Right ventricle myocardium superior (tissue), 1 donor: ENCODE measurements at regions of chr7 and their contacts with region 1.

Region 1: DNA sequence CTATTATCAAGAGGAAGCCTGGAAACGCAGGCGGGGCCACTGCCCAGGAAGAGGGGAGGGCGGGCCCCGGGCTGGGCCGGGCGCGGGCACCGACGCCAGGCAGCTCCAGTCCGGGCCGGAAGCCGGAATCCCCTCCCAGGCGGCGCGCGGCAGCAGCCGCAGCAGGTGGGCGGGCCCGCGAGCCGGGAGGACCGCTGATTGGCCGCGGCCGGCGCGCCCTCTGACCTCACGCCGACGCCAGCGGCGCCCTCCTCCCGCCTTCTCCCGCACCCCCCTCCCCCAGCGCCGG is 438 bp downstream of the BCL7B start:
- DNase-seq: peak; percentile 96
- ATAC-seq: peak; percentile 98

Region 2: DNA sequence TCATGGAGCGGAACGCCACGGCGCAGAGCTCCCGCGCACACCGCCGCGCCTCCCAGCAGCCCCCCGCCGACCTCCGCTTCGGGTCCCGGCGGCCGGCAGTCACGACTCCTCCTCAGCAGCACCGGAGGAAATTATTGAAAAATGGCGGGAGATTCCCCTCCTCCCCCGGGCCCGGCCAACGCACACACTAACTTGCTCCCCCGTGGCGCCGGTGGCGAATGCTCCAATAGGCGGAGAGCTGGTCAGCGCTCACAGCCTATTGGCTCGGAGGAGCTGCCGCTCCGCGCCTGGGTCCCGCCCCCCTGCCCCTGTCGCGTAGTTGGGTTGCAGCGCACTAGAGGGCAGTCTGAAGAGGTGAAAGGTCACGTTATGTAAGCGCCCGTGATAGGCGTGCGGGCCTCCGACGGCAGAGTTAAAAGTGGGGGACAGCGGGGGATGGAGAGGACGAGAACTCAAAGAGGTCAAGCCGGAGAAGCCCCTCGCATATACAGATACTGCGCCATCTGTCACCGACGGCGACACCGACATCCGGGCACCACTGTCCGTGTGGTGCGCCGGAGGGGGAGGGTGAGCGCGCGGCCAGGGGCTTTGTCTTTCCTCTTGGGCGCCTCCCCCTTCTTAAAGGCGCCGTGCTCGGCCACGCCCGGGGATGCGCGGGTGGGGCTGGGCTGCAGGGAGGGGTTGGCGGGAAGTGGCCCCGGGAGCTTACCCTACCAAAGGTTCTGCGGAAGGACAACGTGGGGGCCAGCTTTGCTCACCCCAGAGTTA is 34.8 kb before region 1 on chr7 and contains the start of gene BAZ1B:
- intact Hi-C with region 1: loop called (anchors 5 kb)
- DNase-seq: peak; percentile 98
- ATAC-seq: peak; percentile 98
- total RNA-seq, gene BAZ1B: 36.8 TPM

Region 3: GRCh38 chr7:73683056-73683964 is 126.3 kb after region 1 on chr7 and contains the starts of genes BUD23 and DNAJC30:
- intact Hi-C with region 1: no loop called
- DNase-seq: peak; percentile 98
- ATAC-seq: peak; percentile 98
- total RNA-seq, gene BUD23: 74.8 TPM
- total RNA-seq, gene DNAJC30: 11.8 TPM